ENCODE measurements at regions of chr1 and their contacts with region 1.

Region 1: DNA sequence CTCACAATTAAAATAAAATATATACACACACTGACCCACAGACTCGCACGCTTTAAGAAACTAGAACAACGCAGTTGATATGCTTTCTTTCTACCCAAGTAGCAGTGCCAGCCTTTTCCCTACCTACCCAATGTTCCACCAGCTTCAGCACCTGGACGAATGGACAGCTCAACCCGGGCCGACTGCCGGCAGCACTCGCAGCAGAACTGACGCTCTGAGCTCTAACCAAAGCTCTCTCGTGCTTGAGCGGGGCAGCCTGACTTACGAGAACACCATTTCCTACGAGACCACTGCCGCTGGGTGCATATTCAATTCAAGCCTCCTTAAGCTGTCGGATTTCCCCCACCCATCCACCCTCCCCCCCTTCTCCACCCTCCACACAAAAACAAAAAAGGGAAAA is 127.4 kb upstream of the DPYD start:
- DNase-seq: peak; percentile 84
- H3K4me3 ChIP-seq: peak overlapping the region; percentile 34 to 62 (median 60)
- H3K27ac ChIP-seq: no peak overlapping the region
- H3K4me1 ChIP-seq: peaks cover 32% of the 10 kb centered on the region
- H3K27me3 ChIP-seq: no peaks in the 10 kb centered on the region
- CTCF ChIP-seq: peak in 1 of 2 donors; percentile 6
- POLR2A ChIP-seq: no peak

Region 2: DNA sequence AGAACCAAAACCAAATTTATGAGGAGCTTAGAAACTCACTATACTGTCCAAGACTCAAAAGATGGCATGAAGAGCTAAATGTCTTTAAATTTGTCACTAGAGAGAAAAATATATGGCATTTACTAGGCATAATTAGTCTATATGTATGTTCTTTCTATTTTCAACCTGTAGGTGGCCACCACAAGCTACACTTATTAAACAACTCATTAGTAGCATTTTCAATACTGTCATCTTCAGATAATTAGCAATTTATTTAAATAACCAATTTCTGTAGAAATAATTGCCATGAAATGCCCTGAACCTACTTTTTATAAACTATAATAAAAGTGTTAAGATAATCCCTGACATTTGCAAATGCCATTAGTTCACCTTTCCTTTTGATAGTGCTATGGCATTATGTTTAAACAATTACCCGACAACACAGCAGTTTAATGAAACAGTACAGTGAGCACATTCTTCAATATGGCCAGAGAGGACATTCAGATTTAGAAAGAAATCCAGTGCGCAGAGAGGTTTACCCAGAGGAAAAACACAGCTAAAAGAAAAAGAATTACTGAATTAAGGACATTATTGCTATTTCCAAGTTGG is 804.2 kb before region 1 on chr1:
- CTCF ChIA-PET with region 1: interaction called, 18 read pairs
- POLR2A ChIA-PET with region 1: no interaction called
- dilution Hi-C with region 1: no loop called
- intact Hi-C with region 1: loop called (anchors 1 kb)
- DNase-seq: peak; percentile 48
- H3K4me3 ChIP-seq: no peak overlapping the region
- H3K27ac ChIP-seq: no peak overlapping the region
- H3K4me1 ChIP-seq: no peaks in the 10 kb centered on the region
- H3K27me3 ChIP-seq: no peaks in the 10 kb centered on the region
- CTCF ChIP-seq: peak in 1 of 2 donors; percentile 35
- POLR2A ChIP-seq: no peak

Region 3: GRCh38 chr1:97603776-97604175 is 444.5 kb before region 1 on chr1:
- CTCF ChIA-PET with region 1: interaction called, 4 read pairs
- POLR2A ChIA-PET with region 1: no interaction called
- dilution Hi-C with region 1: no loop called
- intact Hi-C with region 1: loop called (anchors 10 kb)
- DNase-seq: peak; percentile 90
- H3K4me3 ChIP-seq: peak overlapping the region in 1 of 3 experiments; percentile 33
- H3K27ac ChIP-seq: peak overlapping the region; percentile 62
- H3K4me1 ChIP-seq: peaks cover 30% of the 10 kb centered on the region
- H3K27me3 ChIP-seq: no peaks in the 10 kb centered on the region
- CTCF ChIP-seq: no peak
- POLR2A ChIP-seq: no peak

Region 4: GRCh38 chr1:97901017-97901658 is 147.1 kb before region 1 on chr1:
- CTCF ChIA-PET with region 1: no interaction called
- POLR2A ChIA-PET with region 1: no interaction called
- dilution Hi-C with region 1: no loop called
- intact Hi-C with region 1: loop called (anchors 1 kb)
- DNase-seq: peak; percentile 86
- H3K4me3 ChIP-seq: peak overlapping the region; percentile 21 to 88 (median 74)
- H3K27ac ChIP-seq: peak overlapping the region; percentile 92
- H3K4me1 ChIP-seq: peaks cover 44% of the 10 kb centered on the region
- H3K27me3 ChIP-seq: no peaks in the 10 kb centered on the region
- CTCF ChIP-seq: no peak
- POLR2A ChIP-seq: no peak

Region 5: DNA sequence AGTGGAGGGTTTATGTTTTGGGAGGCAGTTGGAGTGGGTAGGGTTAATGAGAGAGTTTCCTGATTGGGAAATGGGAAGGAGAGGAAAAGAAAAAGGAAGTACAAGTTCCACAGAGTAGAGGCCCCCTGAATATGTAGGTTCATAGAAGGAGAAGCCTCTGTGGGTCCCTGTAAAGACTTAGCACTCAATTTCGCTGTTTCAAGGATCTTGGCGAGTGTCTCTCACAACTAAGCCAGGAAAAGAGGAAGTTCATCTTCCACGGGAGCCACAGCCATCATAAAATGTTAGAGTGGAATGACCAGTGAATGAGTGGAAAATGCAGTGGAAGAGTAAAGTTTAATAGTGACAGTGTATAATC is 110.0 kb before region 1 on chr1:
- CTCF ChIA-PET with region 1: interaction called, 3 read pairs
- POLR2A ChIA-PET with region 1: no interaction called
- dilution Hi-C with region 1: no loop called
- intact Hi-C with region 1: loop called (anchors 2 kb)
- DNase-seq: no peak
- H3K4me3 ChIP-seq: no peak overlapping the region
- H3K27ac ChIP-seq: peak overlapping the region; percentile 64
- H3K4me1 ChIP-seq: peaks cover 26% of the 10 kb centered on the region
- H3K27me3 ChIP-seq: no peaks in the 10 kb centered on the region
- CTCF ChIP-seq: no peak
- POLR2A ChIP-seq: no peak

Measured in endothelial cell of umbilical vein (primary cell).